Activated CD4-positive, alpha-beta T cell treated with anti-CD3 and anti-CD28 coated beads, Interleukin-2, amount 10 ng/mL, durations not matched to agents 24 days and 14 days (primary cell): ENCODE measurements at regions of chrX and their contacts with region 1.

Region 1: DNA sequence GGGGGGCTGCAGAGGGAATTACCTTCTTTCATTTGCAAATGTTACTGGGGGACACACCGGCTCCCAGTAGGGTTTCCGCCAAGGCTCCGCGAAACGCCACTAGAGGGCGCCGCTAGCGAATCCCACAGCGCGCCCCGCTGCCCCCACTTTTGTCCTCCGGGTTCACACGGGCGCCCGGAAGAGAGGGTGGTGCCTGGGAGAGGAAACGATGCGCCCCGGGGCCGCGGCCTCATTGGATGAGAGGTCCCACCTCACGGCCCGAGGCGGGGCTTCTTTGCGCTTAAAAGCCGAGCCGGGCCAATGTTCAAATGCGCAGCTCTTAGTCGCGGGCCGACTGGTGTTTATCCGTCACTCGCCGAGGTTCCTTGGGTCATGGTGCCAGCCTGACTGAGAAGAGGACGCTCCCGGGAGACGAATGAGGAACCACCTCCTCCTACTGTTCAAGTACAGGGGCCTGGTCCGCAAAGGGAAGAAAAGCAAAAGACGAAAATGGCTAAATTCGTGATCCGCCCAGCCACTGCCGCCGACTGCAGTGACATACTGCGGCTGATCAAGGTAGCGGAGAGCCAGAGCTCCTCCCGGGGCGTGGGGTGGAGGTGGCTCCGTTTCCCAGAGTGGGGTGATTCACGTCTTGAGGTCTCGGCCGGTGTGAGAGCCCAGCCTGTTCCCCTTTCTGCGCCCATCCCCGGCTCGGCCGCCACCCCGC is at the start of gene SAT1:
- DNase-seq: peak; percentile 98
- H3K4me3 Mint-ChIP-seq: peak within 1 kb of the TSS; percentile 95
- H3K27ac Mint-ChIP-seq: peak within 1 kb of the TSS; percentile 95
- H3K4me1 Mint-ChIP-seq: peaks cover 25% of the 10 kb centered on the region
- H3K27me3 Mint-ChIP-seq: no peaks in the 10 kb centered on the region
- total RNA-seq, gene SAT1: 58.3 and 59.9 TPM in 2 replicates

Region 2: DNA sequence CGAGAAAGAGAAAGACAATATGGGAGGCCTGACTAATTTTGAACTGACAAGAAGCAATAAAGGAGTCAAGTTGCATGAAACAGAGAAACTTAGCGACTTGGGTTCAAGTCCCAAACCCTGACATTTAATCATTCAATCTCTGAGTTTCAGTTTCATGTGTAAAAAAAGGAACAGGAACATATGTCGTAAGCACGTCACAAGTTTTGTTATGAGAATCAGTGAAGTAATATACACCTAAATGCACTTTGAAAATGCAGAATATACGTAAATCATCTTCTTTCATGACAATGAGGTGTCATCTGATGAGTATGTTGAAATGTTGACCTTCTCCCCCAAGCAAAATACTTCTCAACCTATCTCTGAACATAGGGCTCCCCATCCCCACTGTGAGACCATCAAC is 50.3 kb before region 1 on chrX:
- intact Hi-C with region 1: loop called (anchors 1 kb)
- DNase-seq: peak; percentile 61
- H3K4me3 Mint-ChIP-seq: peak overlapping the region; percentile 59
- H3K27ac Mint-ChIP-seq: peak overlapping the region; percentile 89
- H3K4me1 Mint-ChIP-seq: peaks cover 20% of the 10 kb centered on the region
- H3K27me3 Mint-ChIP-seq: no peaks in the 10 kb centered on the region

Region 3: GRCh38 chrX:23756157-23756559 is 26.9 kb before region 1 on chrX:
- intact Hi-C with region 1: loop called (anchors 2 kb)
- DNase-seq: peak; percentile 88
- H3K4me3 Mint-ChIP-seq: no peak overlapping the region
- H3K27ac Mint-ChIP-seq: peak overlapping the region; percentile 20
- H3K4me1 Mint-ChIP-seq: peaks cover 6% of the 10 kb centered on the region
- H3K27me3 Mint-ChIP-seq: no peaks in the 10 kb centered on the region

Region 4: DNA sequence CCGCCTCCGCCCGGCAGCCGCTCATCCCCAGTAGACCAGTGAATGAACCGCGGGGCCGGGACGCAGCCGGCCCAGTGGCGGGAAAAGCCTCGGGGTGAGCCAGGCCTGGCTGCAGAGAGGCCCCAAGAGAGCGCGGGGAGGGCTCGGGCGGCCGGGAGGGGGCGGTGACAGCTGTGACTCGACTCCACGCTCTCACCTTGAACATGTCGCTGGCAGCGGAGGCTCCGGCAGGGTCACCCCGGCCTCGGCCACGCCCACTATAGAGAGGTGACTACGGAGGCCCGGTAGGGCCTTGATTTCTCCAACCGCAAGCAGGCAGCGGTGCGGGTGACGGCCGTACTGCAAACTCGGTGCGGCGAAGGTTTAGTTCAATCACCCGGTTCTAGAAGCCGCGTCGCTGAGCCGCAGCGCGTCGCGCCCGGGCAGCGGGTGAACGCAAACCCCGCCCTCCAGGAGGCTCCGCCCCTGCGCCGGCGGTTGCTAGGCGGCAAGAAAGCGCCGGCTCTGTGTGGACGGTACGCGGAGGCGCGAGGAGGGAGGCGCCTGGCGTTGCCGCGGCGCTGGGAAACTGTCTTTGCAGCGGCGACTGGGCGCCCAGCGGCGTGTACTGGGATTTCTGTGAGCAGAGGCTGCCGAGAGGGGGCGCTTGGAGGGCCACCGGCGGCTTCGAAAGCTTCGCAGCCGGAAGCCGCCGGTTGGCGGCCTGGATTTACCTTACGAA is 124.6 kb after region 1 on chrX and contains the starts of genes APOO and CXorf58:
- intact Hi-C with region 1: loop called (anchors 1 kb)
- DNase-seq: peak; percentile 97
- H3K4me3 Mint-ChIP-seq: peak within 1 kb of the TSS; percentile 82
- H3K27ac Mint-ChIP-seq: peak within 1 kb of the TSS; percentile 88
- H3K4me1 Mint-ChIP-seq: peaks cover 17% of the 10 kb centered on the region
- H3K27me3 Mint-ChIP-seq: no peaks in the 10 kb centered on the region
- total RNA-seq, gene APOO: 27.1 and 33.7 TPM in 2 replicates
- total RNA-seq, gene CXorf58: not detected in 2 replicates

Region 5: DNA sequence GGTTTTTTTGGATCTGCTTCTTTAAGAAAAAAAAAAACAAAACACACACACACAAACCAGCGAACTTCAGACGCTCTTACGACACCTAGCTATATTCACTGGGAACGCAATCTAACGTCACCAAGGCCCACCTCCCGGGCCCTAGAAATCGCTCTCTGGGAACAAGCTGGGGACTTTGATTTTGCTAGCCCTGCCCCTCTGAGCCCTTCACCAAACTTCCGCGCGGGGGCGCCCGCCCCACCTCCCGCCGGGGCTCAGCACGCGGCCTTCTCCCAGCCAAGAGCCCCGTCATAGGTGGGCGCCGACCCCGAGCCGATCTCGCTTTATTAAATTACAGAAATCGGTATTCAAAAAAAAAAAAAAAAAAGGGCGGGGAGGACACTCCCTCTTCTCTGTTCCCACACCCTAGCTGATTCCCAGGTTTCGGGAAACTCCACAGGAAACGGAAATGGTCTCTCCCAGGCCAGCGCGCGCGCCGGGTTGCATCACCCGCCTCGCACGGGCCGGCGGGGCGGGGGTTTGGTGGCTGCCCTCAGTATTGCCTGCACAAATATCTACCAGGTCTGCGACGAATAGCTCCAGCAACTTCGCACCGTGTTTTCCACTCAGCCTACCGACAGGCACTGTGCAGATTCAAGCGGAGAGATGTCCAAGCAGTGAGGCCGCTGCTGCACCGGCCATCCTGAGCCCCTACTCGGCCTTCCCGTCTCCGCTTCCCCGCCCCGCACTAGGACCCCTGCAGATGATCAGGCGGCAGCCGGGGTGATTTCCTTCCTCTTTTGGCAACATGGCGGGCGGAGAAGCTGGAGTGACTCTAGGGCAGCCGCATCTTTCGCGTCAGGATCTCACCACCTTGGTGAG is 271.4 kb after region 1 on chrX and contains the start of gene EIF2S3:
- intact Hi-C with region 1: loop called (anchors 5 kb)
- DNase-seq: peak; percentile 95
- H3K4me3 Mint-ChIP-seq: no peak within 1 kb of the TSS
- H3K27ac Mint-ChIP-seq: peak within 1 kb of the TSS; percentile 100
- H3K4me1 Mint-ChIP-seq: peaks cover 6% of the 10 kb centered on the region
- H3K27me3 Mint-ChIP-seq: no peaks in the 10 kb centered on the region
- total RNA-seq, gene EIF2S3: 207 and 214 TPM in 2 replicates

Region 6: GRCh38 chrX:24317567-24317966 is 534.6 kb after region 1 on chrX:
- intact Hi-C with region 1: no loop called
- DNase-seq: no peak
- H3K4me3 Mint-ChIP-seq: no peak overlapping the region
- H3K27ac Mint-ChIP-seq: no peak overlapping the region
- H3K4me1 Mint-ChIP-seq: no peaks in the 10 kb centered on the region
- H3K27me3 Mint-ChIP-seq: peaks cover 3% of the 10 kb centered on the region